HCT116 (cell line): ENCODE measurements at regions of chr22 and their contacts with region 1.

Region 1: DNA sequence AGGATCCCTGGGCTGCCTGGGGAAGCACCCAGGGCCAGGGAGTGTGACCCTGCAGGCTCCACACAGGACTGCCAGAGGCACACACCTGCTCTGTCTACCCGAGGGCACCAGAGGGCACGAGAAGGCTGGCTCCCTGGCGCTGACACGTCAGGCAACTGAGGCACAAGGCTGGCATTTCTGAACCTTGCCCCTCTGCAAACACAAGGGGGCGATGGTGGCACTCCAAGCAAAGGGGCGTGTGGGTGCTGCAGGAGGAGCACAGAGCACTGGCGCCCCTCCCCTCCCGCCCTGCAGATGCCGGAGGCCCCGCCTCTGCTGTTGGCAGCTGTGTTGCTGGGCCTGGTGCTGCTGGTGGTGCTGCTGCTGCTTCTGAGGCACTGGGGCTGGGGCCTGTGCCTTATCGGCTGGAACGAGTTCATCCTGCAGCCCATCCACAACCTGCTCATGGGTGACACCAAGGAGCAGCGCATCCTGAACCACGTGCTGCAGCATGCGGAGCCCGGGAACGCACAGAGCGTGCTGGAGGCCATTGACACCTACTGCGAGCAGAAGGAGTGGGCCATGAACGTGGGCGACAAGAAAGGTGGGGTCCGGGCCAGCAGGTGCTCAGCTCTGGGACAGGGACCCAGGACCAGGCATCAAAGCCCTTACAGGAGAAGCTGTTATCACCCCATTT is 20.8 kb upstream of the TXNRD2 start:
- DNase-seq: peak; percentile 79
- ATAC-seq: peak; percentile 79
- H3K4me3 ChIP-seq: peak overlapping the region; percentile 46 to 64
- H3K27ac ChIP-seq: peak overlapping the region; percentile 99
- H3K4me1 ChIP-seq: peaks cover 44 to 60% of the 10 kb centered on the region in 2 experiments
- H3K27me3 ChIP-seq: no peaks in the 10 kb centered on the region
- CTCF ChIP-seq: peak; percentile 77 to 88 (median 78)
- POLR2A ChIP-seq: no peak
- RAD21 ChIP-seq: peak; percentile 67

Region 2: GRCh38 chr22:20116951-20117645 is 154.7 kb after region 1 on chr22 and contains the start of gene TRMT2A:
- CTCF ChIA-PET with region 1: no interaction called
- POLR2A ChIA-PET with region 1: no interaction called
- RAD21 ChIA-PET with region 1: no interaction called
- intact Hi-C with region 1: loop called (anchors 10 kb)
- DNase-seq: peak; percentile 97
- ATAC-seq: peak; percentile 81
- H3K4me3 ChIP-seq: peak within 1 kb of the TSS; percentile 96 to 97
- H3K27ac ChIP-seq: peak within 1 kb of the TSS; percentile 79
- H3K4me1 ChIP-seq: peaks cover 12 to 27% of the 10 kb centered on the region in 2 experiments
- H3K27me3 ChIP-seq: no peaks in the 10 kb centered on the region
- CTCF ChIP-seq: no peak
- POLR2A ChIP-seq: peak; percentile 38
- RAD21 ChIP-seq: no peak
- total RNA-seq, gene TRMT2A: 67.3 TPM